Activated CD4-positive, alpha-beta memory T cell treated with anti-CD3 and anti-CD28 coated beads for 36 hours (primary cell): ENCODE measurements at regions of chr17 and their contacts with region 1.

Region 1: GRCh38 chr17:38557836-38558727 is 47.7 kb downstream of the SRCIN1 start:
- DNase-seq: peak; percentile 93
- H3K4me3 Mint-ChIP-seq: peak overlapping the region; percentile 83
- H3K27ac Mint-ChIP-seq: no peak overlapping the region
- H3K4me1 Mint-ChIP-seq: peaks cover 22% of the 10 kb centered on the region
- H3K27me3 Mint-ChIP-seq: peaks cover 21% of the 10 kb centered on the region

Region 2: DNA sequence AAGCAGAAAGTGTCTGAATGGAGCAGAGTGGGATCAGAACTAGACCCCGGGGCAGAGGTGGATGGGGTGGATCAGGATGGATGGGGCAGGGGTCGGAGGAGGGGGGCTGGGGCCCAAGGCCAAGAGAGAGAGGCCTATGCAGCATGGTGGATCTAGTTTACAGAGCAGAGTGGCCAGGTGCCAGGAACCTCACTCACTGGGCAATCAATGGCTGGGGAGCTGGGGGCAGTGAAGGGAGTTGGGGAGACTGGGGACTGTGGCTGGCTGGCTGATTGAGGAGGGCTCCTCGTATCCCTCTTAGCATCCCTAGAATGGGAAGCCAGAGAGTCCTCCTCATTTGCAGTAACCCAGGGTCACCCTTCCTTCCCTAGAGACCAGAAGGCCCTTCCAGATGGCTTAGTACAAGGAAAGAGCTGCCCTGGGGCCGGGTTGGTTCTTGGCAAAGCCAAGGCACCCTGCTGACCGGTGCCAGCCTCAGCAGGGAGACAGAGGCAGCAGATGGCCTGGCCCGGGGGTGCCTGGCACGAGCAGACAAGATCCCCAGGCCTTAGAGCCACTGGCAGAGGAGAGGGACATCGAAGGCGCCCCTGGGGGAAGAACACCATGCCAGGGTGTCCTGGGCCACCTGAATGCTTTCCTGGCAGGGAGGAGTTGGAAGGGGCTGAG is 10.9 kb after region 1 on chr17:
- CTCF ChIA-PET with region 1: interaction called, 23 read pairs
- POLR2A ChIA-PET with region 1: no interaction called
- intact Hi-C with region 1: no loop called
- DNase-seq: no peak
- H3K4me3 Mint-ChIP-seq: no peak overlapping the region
- H3K27ac Mint-ChIP-seq: no peak overlapping the region
- H3K4me1 Mint-ChIP-seq: peaks cover 11% of the 10 kb centered on the region
- H3K27me3 Mint-ChIP-seq: peaks cover 76% of the 10 kb centered on the region

Region 3: GRCh38 chr17:38584350-38584925 is 26.4 kb after region 1 on chr17:
- CTCF ChIA-PET with region 1: interaction called, 196 read pairs
- POLR2A ChIA-PET with region 1: interaction called, 9 read pairs
- intact Hi-C with region 1: loop called (anchors 1 kb)
- DNase-seq: peak; percentile 73
- H3K4me3 Mint-ChIP-seq: no peak overlapping the region
- H3K27ac Mint-ChIP-seq: no peak overlapping the region
- H3K4me1 Mint-ChIP-seq: peaks cover 4% of the 10 kb centered on the region
- H3K27me3 Mint-ChIP-seq: peaks cover 69% of the 10 kb centered on the region

Region 4: GRCh38 chr17:38598536-38598935 is 40.5 kb after region 1 on chr17:
- CTCF ChIA-PET with region 1: interaction called, 24 read pairs
- POLR2A ChIA-PET with region 1: no interaction called
- intact Hi-C with region 1: no loop called
- DNase-seq: peak; percentile 40
- H3K4me3 Mint-ChIP-seq: no peak overlapping the region
- H3K27ac Mint-ChIP-seq: no peak overlapping the region
- H3K4me1 Mint-ChIP-seq: no peaks in the 10 kb centered on the region
- H3K27me3 Mint-ChIP-seq: peaks cover 60% of the 10 kb centered on the region

Region 5: GRCh38 chr17:38667099-38667786 is 109.2 kb after region 1 on chr17:
- CTCF ChIA-PET with region 1: interaction called, 302 read pairs
- POLR2A ChIA-PET with region 1: interaction called, 5 read pairs
- intact Hi-C with region 1: loop called (anchors 1 kb)
- DNase-seq: peak; percentile 75
- H3K4me3 Mint-ChIP-seq: no peak overlapping the region
- H3K27ac Mint-ChIP-seq: no peak overlapping the region
- H3K4me1 Mint-ChIP-seq: peaks cover 16% of the 10 kb centered on the region
- H3K27me3 Mint-ChIP-seq: peaks cover 43% of the 10 kb centered on the region

Region 6: DNA sequence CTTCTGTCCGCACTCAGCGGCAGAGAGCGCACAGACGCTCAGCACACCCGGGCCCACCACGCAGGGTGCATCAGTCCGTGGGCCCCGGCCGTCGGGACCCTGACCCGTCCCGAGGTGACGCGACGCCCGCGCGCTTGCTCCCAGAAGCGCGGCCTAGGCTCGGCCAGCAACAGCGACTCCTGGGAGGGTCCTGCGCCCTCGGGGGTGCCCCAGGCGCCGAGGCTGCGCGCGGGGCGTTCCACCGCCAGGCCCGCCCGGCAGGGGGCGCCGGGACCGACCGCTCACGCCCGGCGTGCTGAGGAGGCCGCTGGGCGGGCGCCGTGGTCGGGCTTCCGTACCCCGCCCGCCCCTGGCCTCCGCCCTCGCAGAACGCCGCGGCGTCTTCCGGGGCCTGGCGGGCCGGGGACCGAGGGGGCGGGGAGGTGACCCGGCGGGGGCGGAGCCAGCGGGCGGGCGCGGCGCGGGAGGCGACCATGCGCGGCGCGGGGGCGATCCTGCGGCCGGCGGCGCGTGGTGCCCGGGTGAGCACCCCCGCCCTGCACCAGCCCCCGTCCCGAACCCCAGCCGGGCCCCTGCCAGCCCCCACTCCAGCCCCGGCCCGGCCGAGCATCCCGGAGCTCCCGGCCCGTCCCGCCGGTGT is 171.9 kb after region 1 on chr17 and contains the start of gene CISD3:
- CTCF ChIA-PET with region 1: interaction called, 30 read pairs
- POLR2A ChIA-PET with region 1: no interaction called
- intact Hi-C with region 1: loop called (anchors 5 kb)
- DNase-seq: peak; percentile 89
- H3K4me3 Mint-ChIP-seq: peak within 1 kb of the TSS; percentile 92
- H3K27ac Mint-ChIP-seq: peak within 1 kb of the TSS; percentile 98
- H3K4me1 Mint-ChIP-seq: peaks cover 78% of the 10 kb centered on the region
- H3K27me3 Mint-ChIP-seq: no peaks in the 10 kb centered on the region
- total RNA-seq, gene CISD3: 54.7 to 59.1 TPM

Region 7: GRCh38 chr17:38752119-38752929 is 194.2 kb after region 1 on chr17 and contains the start of gene PSMB3:
- CTCF ChIA-PET with region 1: interaction called, 4 read pairs
- POLR2A ChIA-PET with region 1: interaction called, 4 read pairs
- intact Hi-C with region 1: loop called (anchors 5 kb)
- DNase-seq: peak; percentile 99
- H3K4me3 Mint-ChIP-seq: peak within 1 kb of the TSS; percentile 92
- H3K27ac Mint-ChIP-seq: peak within 1 kb of the TSS; percentile 94
- H3K4me1 Mint-ChIP-seq: peaks cover 40% of the 10 kb centered on the region
- H3K27me3 Mint-ChIP-seq: peaks cover 27% of the 10 kb centered on the region
- total RNA-seq, gene PSMB3: 335 to 348 TPM